Activated CD8-positive, alpha-beta T cell treated with anti-CD3 and anti-CD28 coated beads for 36 hours (primary cell): ENCODE measurements at regions of chr5 and their contacts with region 1.

Region 1: DNA sequence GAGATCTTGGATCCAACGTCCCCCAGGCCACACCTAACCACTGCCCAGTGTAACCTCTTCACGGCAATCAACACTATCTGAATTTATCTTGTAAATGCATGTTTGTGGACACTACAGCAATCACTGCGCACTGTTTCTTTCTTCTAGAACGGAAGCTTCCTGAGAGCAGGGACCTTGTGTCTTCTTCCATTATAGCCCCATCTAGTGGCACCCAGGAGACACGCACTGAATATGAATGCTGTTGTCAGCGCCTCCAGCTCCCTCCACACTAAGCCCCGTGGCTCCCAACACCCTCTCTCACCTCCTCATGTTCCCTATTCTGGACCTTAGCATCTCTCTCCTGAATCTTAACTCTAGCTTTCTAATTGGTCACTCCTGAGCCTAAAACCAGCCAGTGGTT is 72.7 kb downstream of the SMIM23 start:
- DNase-seq: peak; percentile 24
- ATAC-seq: peak; percentile 68
- H3K4me3 Mint-ChIP-seq: no peak overlapping the region
- H3K27ac Mint-ChIP-seq: no peak overlapping the region
- H3K4me1 Mint-ChIP-seq: peaks cover 12% of the 10 kb centered on the region
- H3K27me3 Mint-ChIP-seq: no peaks in the 10 kb centered on the region
- CTCF ChIP-seq: no peak

Region 2: DNA sequence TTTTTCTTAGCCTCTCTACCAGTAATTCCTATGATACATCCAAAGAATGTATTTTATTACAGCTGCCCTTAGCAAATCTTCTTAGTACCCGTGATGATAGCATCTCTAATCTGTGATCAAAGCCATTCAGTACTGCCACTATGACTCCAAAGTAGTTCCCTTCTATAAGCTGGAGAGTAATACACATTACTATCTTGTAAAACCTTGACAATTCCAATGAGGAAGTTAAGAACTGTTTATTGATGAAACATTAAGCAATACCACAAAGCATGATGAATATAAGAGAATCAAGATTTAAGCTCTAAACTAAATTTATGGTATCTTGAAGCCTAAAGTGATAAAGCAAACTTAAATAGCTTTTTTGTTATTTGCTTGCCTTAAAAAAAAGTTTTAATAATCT is 13.4 kb after region 1 on chr5:
- CTCF ChIA-PET with region 1: interaction called, 12 read pairs
- POLR2A ChIA-PET with region 1: no interaction called
- intact Hi-C with region 1: no loop called
- DNase-seq: no peak
- ATAC-seq: no peak
- H3K4me3 Mint-ChIP-seq: no peak overlapping the region
- H3K27ac Mint-ChIP-seq: no peak overlapping the region
- H3K4me1 Mint-ChIP-seq: peaks cover 4% of the 10 kb centered on the region
- H3K27me3 Mint-ChIP-seq: no peaks in the 10 kb centered on the region
- CTCF ChIP-seq: no peak